Stomach (tissue), 19 donors: ENCODE measurements at regions of chr12 and their contacts with region 1.

Region 1: GRCh38 chr12:14356147-14356546 is 9.3 kb upstream of the ATF7IP start:
- DNase-seq: peak in 1 of 2 donors; percentile 26
- H3K4me3 ChIP-seq: no peak overlapping the region
- H3K27ac ChIP-seq: no peak overlapping the region
- H3K4me1 ChIP-seq: no peaks in the 10 kb centered on the region
- H3K27me3 ChIP-seq: no peaks in the 10 kb centered on the region
- CTCF ChIP-seq: no peak
- EP300 ChIP-seq: no peak
- POLR2A ChIP-seq: no peak

Region 2: DNA sequence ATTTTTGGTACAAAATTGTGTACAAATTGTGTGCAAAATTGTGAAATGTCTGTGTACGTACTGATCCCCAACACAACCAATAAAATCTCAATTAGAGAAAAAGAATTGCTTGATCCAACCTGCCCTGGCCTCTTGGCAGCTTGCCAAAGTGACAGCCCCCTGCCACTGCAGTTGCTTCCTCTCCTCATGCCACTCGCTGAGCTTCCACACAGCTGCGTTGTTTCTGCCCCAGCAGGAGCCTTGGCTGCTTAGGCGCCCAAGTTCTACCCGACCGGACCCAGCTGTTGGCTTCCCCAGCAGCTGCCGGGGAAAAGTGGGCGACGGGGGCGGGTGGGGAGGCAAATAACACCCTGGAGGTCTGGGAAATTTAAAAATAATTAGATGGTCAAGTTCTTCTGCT is 162.5 kb before region 1 on chr12:
- intact Hi-C with region 1: no loop called
- DNase-seq: no peak
- H3K4me3 ChIP-seq: no peak overlapping the region
- H3K27ac ChIP-seq: no peak overlapping the region
- H3K4me1 ChIP-seq: no peaks in the 10 kb centered on the region
- H3K27me3 ChIP-seq: no peaks in the 10 kb centered on the region
- CTCF ChIP-seq: no peak
- EP300 ChIP-seq: no peak
- POLR2A ChIP-seq: no peak

Region 3: DNA sequence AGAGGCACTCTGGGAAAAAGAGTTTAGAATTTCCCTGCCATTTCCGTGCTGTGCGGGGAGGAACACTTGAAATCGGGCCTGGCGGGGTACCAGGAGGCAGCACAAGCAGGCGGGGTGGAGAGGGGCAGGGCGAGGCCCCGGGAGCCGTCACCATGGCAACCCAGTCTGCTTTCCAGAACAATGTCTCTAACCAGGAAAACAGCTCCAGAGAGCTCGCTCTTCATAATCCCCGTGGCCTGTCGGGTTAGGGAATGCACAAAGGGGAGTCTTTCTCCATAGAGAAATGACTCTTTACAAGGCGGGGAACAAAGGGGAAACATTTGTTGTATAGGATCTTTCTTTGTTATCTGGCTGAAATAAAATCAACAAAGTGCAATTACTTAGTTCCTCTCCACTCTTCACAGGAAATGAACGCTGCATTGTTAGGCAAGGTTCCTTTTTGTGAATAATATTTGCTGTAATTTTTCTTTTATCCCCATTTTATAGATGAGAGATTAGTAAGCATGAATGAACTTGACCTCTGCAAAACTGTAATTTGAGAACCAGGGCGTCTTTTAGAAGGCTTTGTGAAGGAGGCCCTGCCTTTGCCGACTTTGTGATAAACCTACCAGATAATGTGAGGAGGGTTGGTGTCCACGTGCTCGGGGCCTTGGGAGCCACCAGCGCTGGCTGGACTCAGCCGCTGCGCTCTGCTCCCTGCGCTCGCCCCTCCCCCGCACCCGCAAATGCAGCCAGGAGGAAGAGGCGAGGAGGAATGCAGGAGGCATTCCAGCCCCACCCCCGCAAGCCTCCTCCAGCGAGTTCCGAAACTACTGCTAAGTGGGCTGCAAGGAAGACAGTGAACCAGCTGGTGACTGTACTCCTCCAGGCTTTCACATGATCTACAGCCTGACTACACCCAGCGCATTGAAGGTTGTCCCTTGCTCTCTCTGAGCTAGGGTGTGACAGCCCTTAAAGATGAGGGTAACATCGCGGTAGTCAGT is 95.8 kb before region 1 on chr12:
- intact Hi-C with region 1: loop called (anchors 10 kb)
- DNase-seq: peak; percentile 89 to 96
- H3K4me3 ChIP-seq: peak overlapping the region; percentile 20 to 35 (median 28)
- H3K27ac ChIP-seq: peak overlapping the region; percentile 67 to 92 (median 86)
- H3K4me1 ChIP-seq: peaks cover 46 to 70% (median 59%) of the 10 kb centered on the region in 4 donors
- H3K27me3 ChIP-seq: no peaks in the 10 kb centered on the region
- CTCF ChIP-seq: no peak
- EP300 ChIP-seq: no peak
- POLR2A ChIP-seq: no peak